ENCODE measurements at regions of chr14 and their contacts with region 1.

Region 1: DNA sequence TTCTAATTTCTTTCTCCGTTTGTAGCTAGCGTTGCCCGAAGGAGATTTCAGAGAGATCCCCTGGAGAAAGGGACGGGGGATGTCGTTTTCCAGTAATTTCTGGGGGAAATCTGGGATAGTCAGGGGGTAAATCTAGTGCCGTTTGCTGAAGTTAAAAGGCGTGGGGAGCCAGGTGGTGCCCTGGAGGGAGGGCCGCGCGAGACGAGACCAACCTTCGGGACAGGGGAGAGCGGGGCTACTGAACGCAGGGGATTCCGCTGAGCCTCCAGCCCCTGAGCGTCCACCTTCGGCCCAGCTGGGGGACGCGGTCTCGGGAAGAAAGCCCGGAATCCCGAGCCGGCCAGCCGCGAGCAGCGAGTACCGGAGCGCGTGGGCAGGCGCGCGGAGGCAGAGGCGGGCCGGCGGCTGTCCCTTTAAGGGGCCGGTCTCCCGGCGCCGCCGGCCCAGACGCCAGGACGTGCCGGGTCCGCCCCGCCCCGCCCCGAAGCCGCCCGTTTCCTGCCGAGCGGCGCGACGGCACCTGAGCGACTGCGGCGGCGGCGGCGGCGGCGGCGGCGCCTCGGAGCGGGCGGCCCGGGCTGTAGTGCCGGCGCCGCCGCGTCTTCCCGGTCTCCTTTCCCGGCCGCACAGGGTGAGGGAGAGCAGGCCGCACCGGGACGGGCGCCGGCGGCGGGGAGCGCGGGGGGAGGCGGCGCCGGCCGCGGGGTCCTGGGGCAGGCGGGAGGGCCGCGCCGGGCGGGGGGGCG is at the start of gene KTN1:
- DNase-seq: peak; percentile 77 to 90 (median 88)
- ATAC-seq: peak; percentile 94
- H3K4me3 ChIP-seq: peak within 1 kb of the TSS; percentile 93
- H3K4me3 Mint-ChIP-seq: peak within 1 kb of the TSS; percentile 93 to 98 (median 95)
- H3K27ac ChIP-seq: peak within 1 kb of the TSS; percentile 86
- H3K27ac Mint-ChIP-seq: peak within 1 kb of the TSS; percentile 90 to 97 (median 93)
- H3K4me1 ChIP-seq: peaks cover 20 to 34% of the 10 kb centered on the region in 2 donors
- H3K4me1 Mint-ChIP-seq: peaks cover 20 to 28% (median 27%) of the 10 kb centered on the region in 7 donors
- H3K27me3 ChIP-seq: no peaks in the 10 kb centered on the region
- H3K27me3 Mint-ChIP-seq: no peaks in the 10 kb centered on the region
- total RNA-seq, gene KTN1: 87.3 to 131 (median 105) TPM

Region 2: GRCh38 chr14:54440873-54441868 is 1138.7 kb before region 1 on chr14 and contains the start of gene CNIH1:
- CTCF ChIA-PET with region 1: no interaction called
- POLR2A ChIA-PET with region 1: no interaction called
- intact Hi-C with region 1: loop called in 1 of 2 experiments (anchors 2 kb)
- DNase-seq: peak; percentile 85 to 99 (median 93)
- ATAC-seq: peak; percentile 97
- H3K4me3 ChIP-seq: peak within 1 kb of the TSS; percentile 73
- H3K4me3 Mint-ChIP-seq: peak within 1 kb of the TSS; percentile 85 to 97 (median 94)
- H3K27ac ChIP-seq: peak within 1 kb of the TSS; percentile 80
- H3K27ac Mint-ChIP-seq: peak within 1 kb of the TSS; percentile 87 to 98 (median 95)
- H3K4me1 ChIP-seq: peaks cover 9 to 23% of the 10 kb centered on the region in 2 donors
- H3K4me1 Mint-ChIP-seq: peaks cover 23 to 54% (median 49%) of the 10 kb centered on the region in 7 donors
- H3K27me3 ChIP-seq: no peaks in the 10 kb centered on the region
- H3K27me3 Mint-ChIP-seq: peaks cover 0 to 2% (median 0%) of the 10 kb centered on the region in 5 donors
- total RNA-seq, gene CNIH1: 50.5 to 87.9 (median 57.8) TPM

Region 3: DNA sequence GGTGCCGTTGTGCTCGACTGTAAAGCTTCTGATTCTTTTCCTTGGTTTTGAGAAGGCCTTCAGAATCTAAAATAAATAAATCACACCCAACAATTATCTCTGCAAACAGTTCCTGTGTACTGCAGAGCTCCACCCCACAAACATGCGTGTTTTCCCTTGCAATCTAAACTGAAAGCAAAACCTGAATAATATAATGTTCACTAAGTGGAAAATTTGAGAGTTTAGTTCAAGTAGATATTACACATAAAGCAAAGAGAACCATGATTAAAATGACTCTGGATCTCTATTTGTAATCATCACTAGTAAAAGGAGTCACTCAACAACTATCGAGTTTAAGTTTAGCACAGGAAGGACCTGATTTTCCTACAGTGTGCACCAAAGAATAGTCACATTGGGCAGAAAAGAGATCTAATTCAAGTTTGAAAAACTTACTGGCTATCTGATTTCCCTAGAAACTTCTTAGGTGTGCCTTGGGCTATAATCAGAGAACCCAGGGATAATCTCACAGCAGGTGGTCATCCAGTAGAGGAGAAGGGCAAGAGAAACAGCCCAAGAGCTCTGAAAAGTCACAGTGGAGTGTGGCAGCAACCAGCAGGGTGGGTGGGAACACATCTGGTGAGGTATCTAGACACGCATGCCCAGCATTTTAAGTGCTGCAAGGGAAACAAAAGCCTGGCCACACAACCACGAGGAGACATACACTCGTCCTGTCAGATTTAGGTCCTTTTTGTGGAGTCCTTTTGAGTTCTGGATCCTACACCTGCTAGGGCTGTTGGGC is 193.7 kb before region 1 on chr14:
- CTCF ChIA-PET with region 1: no interaction called
- POLR2A ChIA-PET with region 1: no interaction called
- intact Hi-C with region 1: no loop called
- DNase-seq: no peak
- ATAC-seq: peak; percentile 29
- H3K4me3 ChIP-seq: no peak overlapping the region
- H3K4me3 Mint-ChIP-seq: peak overlapping the region in 2 of 10 donors; percentile 52 to 73
- H3K27ac ChIP-seq: no peak overlapping the region
- H3K27ac Mint-ChIP-seq: peak overlapping the region; percentile 22 to 94 (median 52)
- H3K4me1 ChIP-seq: peaks cover 0 to 5% of the 10 kb centered on the region in 2 donors
- H3K4me1 Mint-ChIP-seq: peaks cover 0 to 32% (median 8%) of the 10 kb centered on the region in 7 donors
- H3K27me3 ChIP-seq: no peaks in the 10 kb centered on the region
- H3K27me3 Mint-ChIP-seq: no peaks in the 10 kb centered on the region

Region 4: GRCh38 chr14:55411426-55412389 is 168.2 kb before region 1 on chr14 and contains the start of gene ATG14:
- CTCF ChIA-PET with region 1: no interaction called
- POLR2A ChIA-PET with region 1: no interaction called
- intact Hi-C with region 1: loop called in 1 of 2 experiments (anchors 2 kb)
- DNase-seq: peak; percentile 48 to 78 (median 66)
- ATAC-seq: peak; percentile 98
- H3K4me3 ChIP-seq: peak within 1 kb of the TSS; percentile 68
- H3K4me3 Mint-ChIP-seq: peak within 1 kb of the TSS; percentile 68 to 94 (median 92)
- H3K27ac ChIP-seq: peak within 1 kb of the TSS; percentile 86
- H3K27ac Mint-ChIP-seq: peak within 1 kb of the TSS; percentile 86 to 95 (median 90)
- H3K4me1 ChIP-seq: peaks cover 11 to 16% of the 10 kb centered on the region in 2 donors
- H3K4me1 Mint-ChIP-seq: peaks cover 26 to 56% (median 39%) of the 10 kb centered on the region in 7 donors
- H3K27me3 ChIP-seq: no peaks in the 10 kb centered on the region
- H3K27me3 Mint-ChIP-seq: peaks cover 0 to 5% (median 0%) of the 10 kb centered on the region in 5 donors
- total RNA-seq, gene ATG14: 7.8 to 19.6 (median 18.8) TPM

Region 5: DNA sequence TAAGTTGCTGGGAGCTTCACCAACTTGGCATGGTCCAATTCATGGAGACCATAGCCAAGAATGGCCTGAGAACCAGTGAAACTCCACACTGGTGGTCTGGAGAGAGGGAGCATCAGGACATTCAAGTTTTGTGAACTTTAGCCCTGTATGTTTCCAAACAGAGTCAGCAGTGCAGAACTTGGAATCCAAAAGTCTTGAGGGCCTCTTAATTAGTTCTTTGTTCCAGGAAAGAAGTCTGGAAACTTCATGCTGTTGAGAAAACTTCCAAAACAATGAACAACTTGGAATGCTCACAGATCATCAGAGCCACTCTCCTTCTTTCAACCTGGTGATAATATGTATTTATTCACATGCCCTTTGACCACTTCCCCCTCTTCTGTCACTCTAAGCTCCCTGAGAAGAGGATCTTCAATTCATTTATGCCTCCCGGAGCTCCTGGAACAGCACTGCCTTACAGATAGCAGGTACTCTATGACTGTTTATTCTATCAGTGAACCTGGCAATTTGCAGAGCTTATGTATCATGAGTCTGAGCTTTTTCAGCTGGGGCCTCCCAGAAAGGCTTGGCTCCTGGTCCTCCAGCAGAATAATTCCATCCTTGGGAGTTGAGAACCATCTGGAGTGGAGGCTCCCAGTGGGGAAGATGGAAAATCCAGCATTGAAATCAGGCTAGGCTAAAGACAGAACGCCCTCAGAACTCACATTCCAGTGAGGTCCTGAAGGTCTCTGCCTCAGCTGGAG is 191.5 kb after region 1 on chr14:
- CTCF ChIA-PET with region 1: no interaction called
- POLR2A ChIA-PET with region 1: no interaction called
- intact Hi-C with region 1: no loop called
- DNase-seq: no peak
- ATAC-seq: no peak
- H3K4me3 ChIP-seq: no peak overlapping the region
- H3K4me3 Mint-ChIP-seq: no peak overlapping the region
- H3K27ac ChIP-seq: no peak overlapping the region
- H3K27ac Mint-ChIP-seq: no peak overlapping the region
- H3K4me1 ChIP-seq: no peaks in the 10 kb centered on the region
- H3K4me1 Mint-ChIP-seq: peaks cover 0 to under 1% (median 0%) of the 10 kb centered on the region in 7 donors
- H3K27me3 ChIP-seq: no peaks in the 10 kb centered on the region
- H3K27me3 Mint-ChIP-seq: peaks cover 0 to 20% (median 6%) of the 10 kb centered on the region in 5 donors

Region 6: DNA sequence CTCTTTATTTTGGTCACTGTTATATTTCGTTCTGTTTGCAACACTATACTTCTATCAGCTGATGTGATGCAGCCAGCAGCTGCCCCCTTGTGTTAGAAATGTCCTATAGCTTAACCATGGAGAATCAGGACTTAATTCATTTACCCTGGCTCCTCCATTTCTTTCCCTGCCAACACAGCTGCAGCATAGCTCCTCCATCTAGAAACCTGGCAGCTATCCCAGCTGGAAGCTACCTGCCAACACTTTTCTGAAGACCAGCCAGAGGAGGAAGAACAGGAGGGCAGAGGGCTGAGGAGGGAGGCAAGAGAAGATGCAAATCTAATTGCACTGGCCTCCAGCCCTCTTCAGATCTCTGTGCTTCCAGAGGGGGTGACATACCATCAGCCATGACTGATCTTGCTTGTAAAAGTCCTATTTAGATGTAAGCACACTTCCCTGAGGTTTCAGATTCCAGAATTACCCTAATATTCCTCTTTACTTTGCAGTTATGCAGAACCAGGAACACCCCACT is 842.9 kb after region 1 on chr14:
- CTCF ChIA-PET with region 1: no interaction called
- POLR2A ChIA-PET with region 1: no interaction called
- intact Hi-C with region 1: no loop called
- DNase-seq: peak in 6 of 9 donors; percentile 13 to 39 (median 18)
- ATAC-seq: peak; percentile 38
- H3K4me3 ChIP-seq: no peak overlapping the region
- H3K4me3 Mint-ChIP-seq: no peak overlapping the region
- H3K27ac ChIP-seq: no peak overlapping the region
- H3K27ac Mint-ChIP-seq: no peak overlapping the region
- H3K4me1 ChIP-seq: no peaks in the 10 kb centered on the region
- H3K4me1 Mint-ChIP-seq: peaks cover 0 to 4% (median 0%) of the 10 kb centered on the region in 7 donors
- H3K27me3 ChIP-seq: no peaks in the 10 kb centered on the region
- H3K27me3 Mint-ChIP-seq: peaks cover 0 to 24% (median 4%) of the 10 kb centered on the region in 5 donors

Region 7: GRCh38 chr14:56579345-56580220 is 999.7 kb after region 1 on chr14 and contains the start of gene TMEM260:
- CTCF ChIA-PET with region 1: no interaction called
- POLR2A ChIA-PET with region 1: interaction called, 3 read pairs
- intact Hi-C with region 1: loop called in 1 of 2 experiments (anchors 2 kb)
- DNase-seq: peak; percentile 83 to 95 (median 92)
- ATAC-seq: peak; percentile 98
- H3K4me3 ChIP-seq: peak within 1 kb of the TSS; percentile 83
- H3K4me3 Mint-ChIP-seq: peak within 1 kb of the TSS; percentile 87 to 97 (median 95)
- H3K27ac ChIP-seq: peak within 1 kb of the TSS; percentile 88
- H3K27ac Mint-ChIP-seq: peak within 1 kb of the TSS; percentile 90 to 98 (median 96)
- H3K4me1 ChIP-seq: peaks cover 19 to 22% of the 10 kb centered on the region in 2 donors
- H3K4me1 Mint-ChIP-seq: peaks cover 33 to 45% (median 42%) of the 10 kb centered on the region in 7 donors
- H3K27me3 ChIP-seq: no peaks in the 10 kb centered on the region
- H3K27me3 Mint-ChIP-seq: no peaks in the 10 kb centered on the region
- total RNA-seq, gene TMEM260: 20.8 to 39.0 (median 27.4) TPM

Region 8: DNA sequence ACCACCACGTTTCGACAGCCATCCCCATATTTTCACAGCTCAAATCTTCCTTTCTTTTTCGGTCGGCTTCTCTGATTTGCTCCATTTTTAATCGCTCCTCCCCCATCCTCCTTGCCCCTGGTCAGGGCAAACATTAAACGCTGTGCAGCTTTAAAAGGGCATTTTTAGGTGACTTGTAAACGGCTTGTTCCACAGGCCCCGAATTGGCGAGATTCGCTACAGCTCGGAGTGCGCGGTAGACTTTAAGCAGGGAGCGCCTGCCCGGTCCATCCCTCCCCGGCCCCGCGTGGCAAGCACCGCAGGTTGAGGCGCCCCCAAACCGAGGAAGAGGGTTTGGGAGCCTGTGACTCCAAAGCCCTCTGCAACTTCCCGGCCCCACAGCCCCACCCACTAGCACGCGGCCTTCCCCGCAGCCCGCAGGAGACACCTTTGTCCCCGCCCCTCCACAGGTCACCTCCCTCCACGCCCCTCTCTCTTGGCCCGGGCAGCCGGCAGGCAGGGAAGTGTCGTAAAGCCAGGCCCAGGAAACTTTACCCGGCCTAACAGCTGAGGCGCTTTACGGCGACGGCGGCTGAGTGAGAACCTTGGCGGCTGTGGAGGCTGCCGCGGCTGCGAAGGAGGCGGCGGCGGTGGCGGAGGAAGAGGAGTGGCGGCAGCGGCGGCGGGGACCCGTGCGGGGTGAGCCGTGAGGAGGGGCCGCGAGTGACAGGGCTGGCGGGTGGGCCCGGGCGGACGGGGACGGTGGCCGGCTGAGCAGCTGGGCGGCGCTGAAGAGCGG is 1810.3 kb after region 1 on chr14 and contains the start of gene NAA30:
- CTCF ChIA-PET with region 1: no interaction called
- POLR2A ChIA-PET with region 1: no interaction called
- intact Hi-C with region 1: loop called in 1 of 2 experiments (anchors 1 kb)
- DNase-seq: peak; percentile 80 to 97 (median 92)
- ATAC-seq: peak; percentile 98
- H3K4me3 ChIP-seq: peak within 1 kb of the TSS; percentile 68
- H3K4me3 Mint-ChIP-seq: peak within 1 kb of the TSS; percentile 86 to 98 (median 94)
- H3K27ac ChIP-seq: peak within 1 kb of the TSS; percentile 72
- H3K27ac Mint-ChIP-seq: peak within 1 kb of the TSS; percentile 88 to 99 (median 95)
- H3K4me1 ChIP-seq: peaks cover 11 to 13% of the 10 kb centered on the region in 2 donors
- H3K4me1 Mint-ChIP-seq: peaks cover 31 to 58% (median 40%) of the 10 kb centered on the region in 7 donors
- H3K27me3 ChIP-seq: no peaks in the 10 kb centered on the region
- H3K27me3 Mint-ChIP-seq: peaks cover 0 to under 1% (median 0%) of the 10 kb centered on the region in 5 donors
- total RNA-seq, gene NAA30: 14.6 to 19.6 (median 16.2) TPM